Endothelial cell of umbilical vein (primary cell): ENCODE measurements at regions of chr11 and their contacts with region 1.

Region 1: GRCh38 chr11:65225279-65226102 is 36.3 kb upstream of the POLA2 start:
- DNase-seq: peak; percentile 55
- H3K4me3 ChIP-seq: peak overlapping the region; percentile 34 to 65 (median 47)
- H3K27ac ChIP-seq: peak overlapping the region; percentile 12
- H3K4me1 ChIP-seq: peaks cover 20% of the 10 kb centered on the region
- H3K27me3 ChIP-seq: no peaks in the 10 kb centered on the region
- CTCF ChIP-seq: peak; percentile 50 to 58
- POLR2A ChIP-seq: no peak

Region 2: DNA sequence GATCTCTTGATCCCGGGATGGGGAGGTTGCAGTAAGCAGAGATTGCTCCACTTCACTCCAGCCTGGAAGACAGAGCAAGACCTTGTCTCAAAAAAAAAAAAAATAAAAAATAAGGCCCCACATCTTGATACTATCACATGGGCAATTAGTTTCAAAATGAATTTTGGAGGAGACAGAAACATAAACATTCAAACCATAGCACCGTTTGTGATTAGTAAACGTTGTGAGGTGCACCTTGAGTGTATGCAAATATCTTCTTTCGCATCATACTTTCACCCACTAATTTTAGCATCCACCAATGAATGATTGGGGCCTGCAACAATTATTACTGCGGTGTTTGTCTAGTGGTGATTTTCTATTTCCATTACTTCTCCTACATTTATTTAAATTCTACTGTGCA is 66.5 kb before region 1 on chr11:
- CTCF ChIA-PET with region 1: no interaction called
- POLR2A ChIA-PET with region 1: no interaction called
- dilution Hi-C with region 1: no loop called
- intact Hi-C with region 1: no loop called
- DNase-seq: no peak
- H3K4me3 ChIP-seq: no peak overlapping the region
- H3K27ac ChIP-seq: no peak overlapping the region
- H3K4me1 ChIP-seq: no peaks in the 10 kb centered on the region
- H3K27me3 ChIP-seq: no peaks in the 10 kb centered on the region
- CTCF ChIP-seq: no peak
- POLR2A ChIP-seq: no peak

Region 3: DNA sequence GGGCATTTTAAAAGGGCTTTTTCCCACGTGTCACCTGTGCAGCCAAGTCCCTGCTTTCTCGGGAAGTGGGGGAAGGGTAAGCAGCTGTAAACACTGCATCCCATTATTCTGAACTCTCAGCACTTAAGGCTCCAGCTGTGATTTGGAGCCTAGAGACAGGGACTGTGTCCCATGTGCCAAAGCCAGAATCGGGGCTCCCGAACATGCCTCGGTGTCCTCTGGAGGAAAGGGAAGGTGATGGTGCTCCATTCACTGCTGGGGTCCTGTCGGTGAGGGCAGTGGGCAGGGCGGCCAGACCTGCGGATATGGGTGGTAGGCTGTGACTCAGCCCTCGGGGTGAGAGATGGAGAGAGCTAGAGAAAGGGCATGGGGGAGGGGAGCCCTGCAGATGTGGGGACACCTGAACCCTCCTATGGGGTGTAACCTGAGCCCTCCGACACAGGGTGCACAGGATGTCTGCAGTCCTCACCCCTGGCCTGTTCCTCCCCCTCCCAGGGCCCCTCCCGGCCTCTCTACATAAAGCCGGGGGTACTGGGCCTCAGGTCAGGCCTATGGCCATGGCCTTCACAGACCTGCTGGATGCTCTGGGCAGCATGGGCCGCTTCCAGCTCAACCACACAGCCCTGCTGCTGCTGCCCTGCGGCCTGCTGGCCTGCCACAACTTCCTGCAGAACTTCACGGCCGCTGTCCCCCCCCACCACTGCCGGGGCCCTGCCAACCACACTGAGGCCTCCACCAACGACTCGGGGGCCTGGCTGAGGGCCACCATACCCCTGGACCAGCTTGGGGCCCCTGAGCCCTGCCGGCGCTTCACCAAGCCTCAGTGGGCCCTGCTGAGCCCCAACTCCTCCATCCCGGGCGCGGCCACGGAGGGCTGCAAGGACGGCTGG is 11.9 kb before region 1 on chr11:
- CTCF ChIA-PET with region 1: interaction called, 15 read pairs
- POLR2A ChIA-PET with region 1: no interaction called
- dilution Hi-C with region 1: no loop called
- intact Hi-C with region 1: no loop called
- DNase-seq: no peak
- H3K4me3 ChIP-seq: no peak overlapping the region
- H3K27ac ChIP-seq: no peak overlapping the region
- H3K4me1 ChIP-seq: no peaks in the 10 kb centered on the region
- H3K27me3 ChIP-seq: no peaks in the 10 kb centered on the region
- CTCF ChIP-seq: no peak
- POLR2A ChIP-seq: no peak

Region 4: DNA sequence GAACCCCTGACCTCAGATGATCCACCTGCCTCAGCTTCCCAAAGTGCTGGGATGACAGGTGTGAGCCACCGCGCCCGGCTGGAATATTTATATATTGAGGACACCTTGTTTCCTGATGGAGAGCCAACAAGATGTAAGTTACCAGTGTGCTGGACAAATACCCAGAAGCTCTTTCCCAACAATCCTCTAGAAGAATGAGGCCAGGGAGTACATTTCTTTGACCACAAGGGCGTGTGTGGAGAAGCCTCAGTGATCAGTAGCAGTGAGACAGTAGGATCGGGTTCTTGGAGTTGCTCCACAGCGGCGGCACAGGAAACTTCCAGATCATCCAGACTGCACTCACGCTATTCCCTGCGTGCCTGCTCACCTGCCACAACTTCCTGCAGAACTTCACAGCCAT is 26.0 kb after region 1 on chr11:
- CTCF ChIA-PET with region 1: interaction called, 34 read pairs
- POLR2A ChIA-PET with region 1: no interaction called
- dilution Hi-C with region 1: no loop called
- intact Hi-C with region 1: loop called (anchors 1 kb)
- DNase-seq: no peak
- H3K4me3 ChIP-seq: no peak overlapping the region
- H3K27ac ChIP-seq: no peak overlapping the region
- H3K4me1 ChIP-seq: no peaks in the 10 kb centered on the region
- H3K27me3 ChIP-seq: no peaks in the 10 kb centered on the region
- CTCF ChIP-seq: no peak
- POLR2A ChIP-seq: no peak

Region 5: GRCh38 chr11:65274735-65275682 is 49.5 kb after region 1 on chr11:
- CTCF ChIA-PET with region 1: interaction called, 14 read pairs
- POLR2A ChIA-PET with region 1: no interaction called
- dilution Hi-C with region 1: no loop called
- intact Hi-C with region 1: no loop called
- DNase-seq: peak; percentile 97
- H3K4me3 ChIP-seq: no peak overlapping the region
- H3K27ac ChIP-seq: peak overlapping the region; percentile 92
- H3K4me1 ChIP-seq: peaks cover 39% of the 10 kb centered on the region
- H3K27me3 ChIP-seq: no peaks in the 10 kb centered on the region
- CTCF ChIP-seq: peak; percentile 60 to 83
- POLR2A ChIP-seq: peak; percentile 48

Region 6: GRCh38 chr11:65354265-65355012 is 128.9 kb after region 1 on chr11 and contains the start of gene TIGD3:
- CTCF ChIA-PET with region 1: interaction called, 10 read pairs
- POLR2A ChIA-PET with region 1: no interaction called
- dilution Hi-C with region 1: no loop called
- intact Hi-C with region 1: no loop called
- DNase-seq: peak; percentile 98
- H3K4me3 ChIP-seq: peak within 1 kb of the TSS; percentile 29 to 51 (median 47)
- H3K27ac ChIP-seq: no peak within 1 kb of the TSS
- H3K4me1 ChIP-seq: peaks cover 14% of the 10 kb centered on the region
- H3K27me3 ChIP-seq: peaks cover 5 to 6% of the 10 kb centered on the region in 2 experiments
- CTCF ChIP-seq: no peak
- POLR2A ChIP-seq: peak; percentile 79
- total RNA-seq, gene TIGD3: 0.27 TPM in 1 of 2 replicates, not detected in the other